SK-N-SH (cell line): ENCODE measurements at regions of chr6 and their contacts with region 1.

Region 1: DNA sequence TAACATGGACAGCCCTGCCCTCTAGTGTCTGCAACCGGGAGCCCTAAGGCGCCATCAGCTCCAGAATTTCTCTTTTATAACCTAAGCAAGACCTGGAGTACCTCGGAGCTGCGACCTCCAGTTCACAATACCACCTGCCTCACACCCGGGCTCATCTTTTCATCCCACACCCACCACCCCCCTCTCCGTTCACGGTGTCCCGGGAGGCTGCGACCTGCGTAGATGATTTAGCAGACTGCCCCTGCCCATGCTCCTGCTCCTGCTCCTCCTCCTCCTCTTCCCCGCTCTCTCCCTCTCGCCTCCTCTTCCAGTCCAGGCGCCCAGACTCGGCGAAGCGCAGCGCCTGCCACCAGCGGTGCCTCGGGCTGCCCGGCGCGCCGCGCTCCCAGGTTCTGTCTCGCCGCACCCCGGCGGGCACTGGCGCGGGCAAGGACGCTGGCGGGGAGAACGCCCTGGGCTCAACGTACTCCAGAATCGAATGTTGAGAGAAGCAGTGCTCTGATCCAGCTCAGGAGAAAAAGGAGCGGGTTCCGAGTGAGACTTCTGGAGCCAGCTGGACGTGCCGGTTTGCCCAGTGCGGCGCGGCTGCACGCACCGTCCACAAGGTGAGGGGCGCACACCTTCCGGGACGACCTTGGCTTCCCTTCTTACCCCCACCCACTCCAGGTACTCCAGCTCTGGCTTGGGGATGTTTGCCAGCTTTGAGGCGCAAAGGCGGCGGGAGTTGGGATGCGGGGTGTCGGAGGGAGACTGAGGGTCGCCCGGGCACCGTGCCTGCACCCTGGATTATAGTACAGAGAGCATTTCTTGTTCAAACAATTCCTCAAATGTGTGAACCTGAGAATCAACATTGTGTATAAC is at the start of gene HTR1E:
- DNase-seq: peak; percentile 86
- H3K4me3 ChIP-seq: peak within 1 kb of the TSS; percentile 50 to 59
- H3K27ac ChIP-seq: peak within 1 kb of the TSS in 1 of 2 experiments; percentile 95; a peak in 2 of 4 replicates
- H3K4me1 ChIP-seq: peaks cover 0 to 15% of the 10 kb centered on the region in 2 experiments; a peak in 1 of 4 replicates
- H3K27me3 ChIP-seq: peaks cover 9% of the 10 kb centered on the region; the same call in 1 of the 2 replicates
- CTCF ChIP-seq: peak; percentile 57
- EP300 ChIP-seq: no peak
- RAD21 ChIP-seq: peak; percentile 86
- polyA plus RNA-seq, gene HTR1E: 0.02 and 0.03 TPM in 2 replicates

Region 2: GRCh38 chr6:86215323-86215722 is 722.1 kb before region 1 on chr6:
- CTCF ChIA-PET with region 1: interaction called, 16 read pairs
- POLR2A ChIA-PET with region 1: interaction called, 17 read pairs
- DNase-seq: peak; percentile 48
- H3K4me3 ChIP-seq: no peak overlapping the region
- H3K27ac ChIP-seq: peak overlapping the region in 1 of 2 experiments; percentile 99; a peak in 2 of 4 replicates
- H3K4me1 ChIP-seq: peaks cover 0 to 10% of the 10 kb centered on the region in 2 experiments; a peak in 2 of 4 replicates
- H3K27me3 ChIP-seq: no peaks in the 10 kb centered on the region
- CTCF ChIP-seq: no peak
- EP300 ChIP-seq: peak in 1 of 2 experiments; percentile 98; a peak in 2 of 4 replicates
- RAD21 ChIP-seq: peak; percentile 51

Region 3: DNA sequence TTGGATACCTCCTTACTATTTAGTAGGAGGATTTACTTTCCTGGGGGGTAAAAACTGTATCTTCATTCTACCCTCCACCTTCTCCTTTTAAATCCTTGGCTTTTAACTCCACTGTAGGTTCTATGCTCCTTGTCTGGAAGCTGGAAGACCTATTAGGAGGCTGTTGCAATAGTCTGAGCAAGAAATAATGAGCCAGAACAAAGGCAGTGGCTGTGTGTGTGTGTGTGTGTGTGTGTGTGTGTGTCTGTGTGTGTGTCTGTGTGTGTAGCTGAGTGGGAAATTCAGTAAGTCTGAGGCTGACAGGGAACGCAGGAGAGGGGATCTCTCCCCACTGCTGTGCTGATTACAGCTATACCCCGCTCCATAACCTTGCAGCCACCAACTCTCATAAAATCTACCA is 35.6 kb after region 1 on chr6:
- CTCF ChIA-PET with region 1: no interaction called
- POLR2A ChIA-PET with region 1: no interaction called
- DNase-seq: no peak
- H3K4me3 ChIP-seq: no peak overlapping the region
- H3K27ac ChIP-seq: no peak overlapping the region
- H3K4me1 ChIP-seq: peaks cover 0 to 2% of the 10 kb centered on the region in 2 experiments; a peak in 1 of 4 replicates
- H3K27me3 ChIP-seq: no peaks in the 10 kb centered on the region
- CTCF ChIP-seq: no peak
- EP300 ChIP-seq: no peak
- RAD21 ChIP-seq: no peak

Region 4: DNA sequence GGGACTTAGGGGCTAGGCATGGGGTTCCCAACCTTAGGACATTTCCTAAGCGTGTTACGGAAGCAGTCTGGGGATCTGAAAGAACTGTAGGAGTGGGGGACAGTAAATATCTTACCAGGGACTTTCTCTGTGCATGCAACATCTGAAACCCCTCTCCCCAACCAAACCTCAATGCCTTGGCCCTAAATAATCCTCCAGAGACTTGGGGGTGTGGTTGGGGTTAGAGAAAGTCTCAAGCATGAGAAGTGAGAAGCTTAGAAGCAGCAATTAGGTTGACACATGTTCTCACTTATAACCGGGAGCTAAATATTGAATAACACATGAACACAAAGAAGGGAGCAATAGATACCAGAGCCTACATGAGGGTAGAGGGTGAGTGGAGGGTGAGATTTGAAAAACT is 74.6 kb after region 1 on chr6:
- CTCF ChIA-PET with region 1: no interaction called
- POLR2A ChIA-PET with region 1: no interaction called
- DNase-seq: no peak
- H3K4me3 ChIP-seq: no peak overlapping the region
- H3K27ac ChIP-seq: no peak overlapping the region
- H3K4me1 ChIP-seq: no peaks in the 10 kb centered on the region
- H3K27me3 ChIP-seq: no peaks in the 10 kb centered on the region
- CTCF ChIP-seq: no peak
- EP300 ChIP-seq: no peak
- RAD21 ChIP-seq: no peak